IMR-90 (cell line): ENCODE measurements at regions of chr5 and their contacts with region 1.

Region 1: DNA sequence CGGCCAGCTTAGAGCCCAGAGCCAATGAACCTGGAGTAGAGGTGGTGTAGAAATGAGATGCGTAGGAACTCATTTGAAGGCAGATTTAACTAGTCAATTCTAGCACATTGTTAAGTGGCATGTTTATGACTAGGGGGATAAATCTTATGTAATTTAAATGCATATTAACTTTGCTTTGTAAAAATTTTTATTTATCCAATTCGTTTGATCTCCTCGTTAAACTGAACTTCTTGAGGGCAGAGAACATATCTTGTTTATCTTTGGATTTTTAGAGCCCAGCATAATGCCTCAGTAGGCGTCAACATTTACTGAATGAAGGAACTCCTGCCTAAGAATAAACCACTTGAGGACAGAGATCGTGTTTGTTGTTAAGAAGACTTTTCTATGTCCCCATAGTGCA is 41.1 kb upstream of the ACOT12 start:
- DNase-seq: no peak
- ATAC-seq: no peak
- H3K4me3 ChIP-seq: no peak overlapping the region
- H3K27ac ChIP-seq: no peak overlapping the region
- H3K4me1 ChIP-seq: no peaks in the 10 kb centered on the region
- H3K27me3 ChIP-seq: no peaks in the 10 kb centered on the region
- CTCF ChIP-seq: no peak
- POLR2A ChIP-seq: no peak
- RAD21 ChIP-seq: no peak

Region 2: DNA sequence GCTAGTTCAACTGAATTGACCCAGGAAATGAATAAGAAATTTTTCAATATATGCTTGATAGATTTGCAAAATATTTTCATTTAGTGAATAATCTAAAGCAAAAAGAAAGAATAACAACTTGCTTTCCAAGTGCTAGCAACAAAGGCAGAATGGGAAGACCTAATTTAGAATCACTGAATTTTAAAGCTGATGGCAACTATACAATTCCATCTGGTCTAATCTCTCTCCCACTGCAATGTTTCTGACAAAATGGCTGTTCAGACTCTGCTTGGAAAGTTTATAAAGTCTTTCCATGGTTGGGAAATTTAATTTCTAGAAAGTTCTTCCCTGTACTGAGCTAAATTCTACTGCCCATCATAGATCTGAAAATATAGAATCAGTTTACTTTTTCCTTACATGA is 34.7 kb after region 1 on chr5:
- CTCF ChIA-PET with region 1: no interaction called
- POLR2A ChIA-PET with region 1: interaction called, 15 read pairs
- dilution Hi-C with region 1: no loop called
- in situ Hi-C with region 1: no loop called
- intact Hi-C with region 1: loop called (anchors 1 kb)
- DNase-seq: no peak
- ATAC-seq: no peak
- H3K4me3 ChIP-seq: no peak overlapping the region
- H3K27ac ChIP-seq: no peak overlapping the region
- H3K4me1 ChIP-seq: no peaks in the 10 kb centered on the region
- H3K27me3 ChIP-seq: no peaks in the 10 kb centered on the region
- CTCF ChIP-seq: no peak
- POLR2A ChIP-seq: no peak
- RAD21 ChIP-seq: no peak

Region 3: GRCh38 chr5:81506900-81507588 is 72.0 kb after region 1 on chr5:
- CTCF ChIA-PET with region 1: no interaction called
- POLR2A ChIA-PET with region 1: no interaction called
- dilution Hi-C with region 1: no loop called
- in situ Hi-C with region 1: no loop called
- intact Hi-C with region 1: no loop called
- DNase-seq: peak; percentile 93
- ATAC-seq: peak; percentile 95
- H3K4me3 ChIP-seq: no peak overlapping the region
- H3K27ac ChIP-seq: no peak overlapping the region
- H3K4me1 ChIP-seq: no peaks in the 10 kb centered on the region
- H3K27me3 ChIP-seq: no peaks in the 10 kb centered on the region
- CTCF ChIP-seq: peak; percentile 96
- POLR2A ChIP-seq: no peak
- RAD21 ChIP-seq: peak; percentile 98

Region 4: DNA sequence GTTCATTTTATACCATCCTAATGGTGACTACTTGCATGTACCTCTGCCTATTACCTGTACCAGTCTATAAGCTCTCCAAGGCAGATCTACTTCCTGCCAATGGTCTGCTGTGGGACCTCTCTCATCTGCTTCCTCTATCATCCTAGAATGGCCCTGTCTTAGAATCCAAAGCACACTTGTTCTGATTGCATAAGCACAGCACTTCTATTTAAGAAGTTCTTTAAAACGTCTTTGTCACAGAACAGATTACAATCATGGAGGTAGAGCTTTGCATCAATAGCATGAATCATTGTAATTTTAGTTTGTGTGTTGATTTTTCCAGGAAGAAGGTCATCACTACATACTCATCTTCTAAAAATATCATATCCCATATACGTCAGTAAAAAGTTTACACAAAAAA is 90.7 kb after region 1 on chr5:
- CTCF ChIA-PET with region 1: no interaction called
- POLR2A ChIA-PET with region 1: no interaction called
- dilution Hi-C with region 1: no loop called
- in situ Hi-C with region 1: no loop called
- intact Hi-C with region 1: no loop called
- DNase-seq: peak; percentile 88
- ATAC-seq: peak; percentile 32; the same call in 1 of the 2 replicates
- H3K4me3 ChIP-seq: no peak overlapping the region
- H3K27ac ChIP-seq: no peak overlapping the region
- H3K4me1 ChIP-seq: peaks cover 2% of the 10 kb centered on the region; the same call in 1 of the 2 replicates
- H3K27me3 ChIP-seq: no peaks in the 10 kb centered on the region
- CTCF ChIP-seq: no peak
- POLR2A ChIP-seq: no peak
- RAD21 ChIP-seq: no peak

Region 5: GRCh38 chr5:81544351-81545018 is 109.5 kb after region 1 on chr5:
- CTCF ChIA-PET with region 1: no interaction called
- POLR2A ChIA-PET with region 1: no interaction called
- dilution Hi-C with region 1: no loop called
- in situ Hi-C with region 1: no loop called
- intact Hi-C with region 1: no loop called
- DNase-seq: peak; percentile 8
- ATAC-seq: peak; percentile 29
- H3K4me3 ChIP-seq: no peak overlapping the region
- H3K27ac ChIP-seq: no peak overlapping the region
- H3K4me1 ChIP-seq: no peaks in the 10 kb centered on the region
- H3K27me3 ChIP-seq: no peaks in the 10 kb centered on the region
- CTCF ChIP-seq: no peak
- POLR2A ChIP-seq: no peak
- RAD21 ChIP-seq: no peak